ENCODE measurements at regions of chr12 and their contacts with region 1.

Region 1: DNA sequence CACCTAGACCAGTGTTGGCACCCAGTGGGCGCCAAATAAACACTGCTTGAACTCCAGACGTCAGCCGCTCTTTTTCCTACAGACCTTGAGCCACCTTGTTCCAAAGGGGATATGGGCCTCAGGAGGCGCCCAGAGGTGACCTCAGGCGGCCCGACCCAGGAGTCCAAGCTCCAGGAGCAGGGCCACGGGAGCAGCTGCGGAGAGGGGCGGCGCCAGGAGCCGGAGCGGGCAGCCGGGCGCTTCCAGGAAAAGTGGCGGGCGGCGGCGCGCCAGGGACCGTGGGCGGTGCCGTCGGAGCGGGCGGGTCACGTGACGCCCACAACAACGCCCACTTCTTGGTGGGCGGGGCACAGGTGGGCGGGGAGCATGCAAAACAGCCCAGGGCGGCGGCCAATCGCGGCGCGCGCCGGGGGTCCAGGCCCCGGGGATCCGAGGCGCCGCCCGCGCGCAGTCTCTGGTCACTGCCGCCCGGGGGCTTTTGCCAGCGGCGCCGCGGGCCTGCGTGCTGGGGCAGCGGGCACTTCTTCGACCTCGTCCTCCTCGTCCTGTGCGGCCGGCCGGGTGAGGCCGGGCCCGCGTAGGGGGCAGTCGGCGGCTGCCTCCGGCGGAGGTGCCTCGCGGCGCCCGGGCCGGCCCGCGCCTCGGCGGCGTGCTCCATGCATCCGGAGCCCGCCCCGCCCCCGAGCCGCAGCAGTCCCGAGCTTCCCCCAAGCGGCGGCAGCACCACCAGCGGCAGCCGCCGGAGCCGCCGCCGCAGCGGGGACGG is at the start of gene ORAI1:
- DNase-seq: peak; percentile 97
- ATAC-seq: peak; percentile 80
- H3K4me3 Mint-ChIP-seq: peak within 1 kb of the TSS; percentile 88
- H3K27ac Mint-ChIP-seq: peak within 1 kb of the TSS; percentile 95
- H3K4me1 Mint-ChIP-seq: peaks cover 40% of the 10 kb centered on the region
- H3K27me3 Mint-ChIP-seq: no peaks in the 10 kb centered on the region
- total RNA-seq, gene ORAI1: 53.7 to 61.1 TPM

Region 2: DNA sequence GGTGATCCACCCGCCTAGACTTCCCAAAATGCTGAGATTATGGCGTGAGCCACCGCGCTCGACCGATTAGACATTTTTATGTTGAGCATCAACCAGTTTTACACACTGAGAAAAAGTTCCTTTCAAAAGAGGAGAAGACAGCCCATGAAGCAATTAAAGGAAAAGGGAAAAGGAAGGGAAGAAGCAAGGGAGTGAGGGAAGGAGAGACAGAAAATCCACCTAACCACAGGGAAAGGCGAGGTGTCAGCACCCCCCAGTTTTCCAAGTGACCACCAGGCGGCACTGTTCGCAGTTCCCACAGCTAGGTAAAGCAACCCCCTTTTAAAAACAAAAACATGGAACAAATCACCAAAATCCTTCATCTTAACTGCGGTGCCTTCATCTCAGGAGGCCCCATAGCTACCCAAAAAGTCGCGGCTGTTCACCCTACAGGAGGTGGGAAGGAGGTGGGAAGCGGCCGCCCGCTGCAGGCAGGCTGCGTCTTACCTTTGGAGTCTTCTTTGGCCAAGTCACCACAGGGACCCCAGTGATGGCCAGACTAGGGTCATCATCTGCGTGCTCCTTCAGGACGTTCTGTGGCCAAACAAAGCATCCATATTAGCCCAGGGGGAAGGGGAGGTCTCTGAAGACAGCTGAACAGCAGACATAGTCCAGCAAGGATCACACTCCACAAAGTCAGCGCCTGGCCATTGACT is 132.0 kb before region 1 on chr12:
- CTCF ChIA-PET with region 1: interaction called, 28 read pairs
- DNase-seq: peak; percentile 68
- ATAC-seq: peak; percentile 51
- H3K4me3 Mint-ChIP-seq: no peak overlapping the region
- H3K27ac Mint-ChIP-seq: no peak overlapping the region
- H3K4me1 Mint-ChIP-seq: peaks cover 32% of the 10 kb centered on the region
- H3K27me3 Mint-ChIP-seq: no peaks in the 10 kb centered on the region

Region 3: DNA sequence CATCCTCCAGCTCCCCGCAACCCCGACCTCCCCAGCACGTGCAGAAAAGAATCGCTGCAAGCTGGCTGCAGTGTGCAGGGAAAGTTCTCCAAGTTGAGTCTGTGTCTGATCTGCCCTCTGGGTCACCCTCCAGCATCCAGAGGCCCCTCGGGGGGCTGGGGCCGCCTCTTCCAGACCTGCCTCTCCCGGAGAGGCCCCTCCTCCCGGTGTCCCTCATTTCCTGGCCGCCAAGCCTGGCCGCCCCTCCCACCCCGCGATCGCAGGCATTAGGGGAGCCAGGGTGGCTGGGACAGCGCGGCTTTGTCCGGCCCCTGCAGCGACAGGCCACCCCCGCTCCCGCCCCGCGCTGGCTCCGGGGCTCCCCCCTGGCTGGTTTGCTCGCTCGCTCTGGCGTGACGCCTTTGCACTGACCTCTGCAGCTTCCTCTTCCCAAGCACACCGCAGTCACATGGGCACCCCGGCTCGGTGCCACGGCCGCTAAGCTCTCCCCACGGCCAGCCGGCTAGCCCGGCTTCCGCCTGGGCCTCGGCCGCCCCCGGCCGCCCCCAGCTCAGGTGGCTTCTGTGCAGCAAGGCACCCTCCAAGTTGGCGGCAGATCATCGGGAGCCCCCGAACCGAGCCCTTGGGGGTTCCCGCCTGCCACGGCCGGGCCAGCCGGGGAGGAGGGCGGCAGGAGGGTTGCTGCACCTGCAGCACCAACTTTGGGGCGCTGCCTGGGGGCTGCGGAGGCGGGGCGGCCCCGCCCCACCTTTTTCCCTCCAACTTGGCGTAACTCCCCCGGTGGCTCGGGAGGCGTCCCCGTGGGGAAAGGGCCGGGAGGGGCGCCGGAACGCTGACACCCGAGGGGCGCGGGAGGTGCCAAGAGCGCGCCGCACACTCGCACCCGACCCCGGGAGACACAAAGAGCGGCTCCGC is 89.1 kb before region 1 on chr12:
- CTCF ChIA-PET with region 1: interaction called, 16 read pairs
- DNase-seq: peak; percentile 79
- ATAC-seq: peak; percentile 65
- H3K4me3 Mint-ChIP-seq: peak overlapping the region; percentile 71
- H3K27ac Mint-ChIP-seq: peak overlapping the region; percentile 67
- H3K4me1 Mint-ChIP-seq: peaks cover 53% of the 10 kb centered on the region
- H3K27me3 Mint-ChIP-seq: no peaks in the 10 kb centered on the region

Region 4: DNA sequence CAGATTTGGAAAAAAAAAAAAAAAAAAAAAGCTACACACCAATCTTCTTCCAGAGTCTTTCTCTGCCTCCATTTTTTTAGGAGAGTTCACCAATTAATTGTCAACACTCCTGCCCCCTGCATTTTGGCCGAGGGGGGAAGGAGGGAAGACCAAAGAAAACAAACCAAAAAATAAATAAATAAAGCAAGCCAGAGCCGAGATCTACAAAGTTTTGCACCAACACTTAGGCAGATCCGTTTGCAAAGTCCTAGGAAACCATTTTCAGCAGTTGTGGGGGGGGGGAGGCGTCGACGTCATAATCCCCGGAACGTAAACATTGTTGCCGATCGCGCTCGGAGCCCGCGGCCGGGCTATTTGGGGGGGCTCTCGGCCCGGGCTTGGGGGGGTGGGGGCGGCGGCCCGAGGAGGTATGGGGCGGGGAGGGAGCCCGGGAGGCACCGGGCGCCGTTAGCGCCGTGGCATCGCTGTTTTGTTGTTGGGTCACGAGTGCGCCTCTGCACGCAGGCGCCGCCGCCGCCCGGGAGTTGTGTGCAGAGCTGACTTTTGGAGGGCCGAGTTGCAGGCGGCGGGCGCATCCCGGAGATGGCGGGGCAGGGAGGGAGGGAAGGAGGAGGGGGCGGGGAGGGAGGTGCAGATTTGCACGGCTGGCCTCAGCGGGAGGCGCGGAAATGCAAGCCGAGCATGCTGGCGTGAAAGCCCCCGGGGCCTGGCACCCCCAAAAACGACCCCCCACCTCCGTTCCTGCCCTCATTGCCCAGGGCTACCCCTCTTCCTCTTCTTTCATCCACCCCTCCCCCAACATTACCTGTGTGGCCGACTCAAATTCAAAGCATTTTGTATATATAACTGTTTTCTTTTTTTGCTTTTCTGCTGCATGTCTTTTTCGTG is 46.0 kb before region 1 on chr12:
- CTCF ChIA-PET with region 1: interaction called, 44 read pairs
- DNase-seq: peak; percentile 85
- ATAC-seq: peak; percentile 78
- H3K4me3 Mint-ChIP-seq: peak overlapping the region; percentile 85
- H3K27ac Mint-ChIP-seq: peak overlapping the region; percentile 96
- H3K4me1 Mint-ChIP-seq: peaks cover 26% of the 10 kb centered on the region
- H3K27me3 Mint-ChIP-seq: no peaks in the 10 kb centered on the region

Region 5: GRCh38 chr12:121657305-121658008 is 31.2 kb after region 1 on chr12:
- CTCF ChIA-PET with region 1: interaction called, 11 read pairs
- DNase-seq: peak; percentile 61
- ATAC-seq: no peak
- H3K4me3 Mint-ChIP-seq: no peak overlapping the region
- H3K27ac Mint-ChIP-seq: peak overlapping the region; percentile 69
- H3K4me1 Mint-ChIP-seq: peaks cover 64% of the 10 kb centered on the region
- H3K27me3 Mint-ChIP-seq: no peaks in the 10 kb centered on the region

Region 6: DNA sequence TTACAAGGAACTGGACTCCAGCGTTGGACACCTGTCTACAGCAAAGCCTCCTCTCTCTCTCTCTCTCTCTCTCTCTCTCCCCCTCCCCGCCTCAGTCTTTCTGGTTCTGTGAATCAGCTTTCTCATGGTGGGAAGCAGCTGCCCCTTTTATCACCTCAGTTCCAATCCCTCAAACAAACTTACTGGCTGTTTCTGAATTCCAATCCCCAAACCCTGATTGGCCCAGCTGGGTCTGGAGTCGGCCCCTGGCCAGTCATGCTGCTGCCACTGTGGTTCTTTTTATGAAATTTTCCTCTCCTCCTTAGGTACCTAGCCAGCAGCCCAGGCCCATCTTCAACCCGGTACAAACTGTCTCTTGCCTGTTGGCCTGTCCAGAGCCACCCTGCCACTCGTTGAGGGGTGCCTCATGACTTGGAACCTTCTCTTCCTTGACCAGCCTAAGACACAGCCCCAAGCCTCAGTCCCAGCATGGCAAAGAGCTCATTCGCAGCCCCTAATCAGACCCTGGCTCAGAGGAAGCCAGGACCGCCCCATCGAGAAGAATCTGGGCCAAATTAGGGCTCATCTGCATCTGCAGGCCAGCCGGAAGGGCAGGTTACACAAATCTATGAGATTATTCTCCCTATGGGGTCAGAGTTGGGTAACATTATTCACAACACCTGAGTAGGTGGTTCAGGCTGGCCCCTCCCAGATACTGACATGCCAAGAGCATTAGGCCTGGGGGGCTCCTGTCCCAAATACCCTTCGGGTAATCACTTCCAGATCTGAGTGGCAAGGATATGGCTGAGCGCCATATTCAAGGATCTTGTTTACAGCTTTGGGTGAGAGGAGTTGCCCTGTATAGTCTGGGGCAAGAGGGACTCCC is 52.7 kb after region 1 on chr12:
- CTCF ChIA-PET with region 1: interaction called, 20 read pairs
- DNase-seq: no peak
- ATAC-seq: no peak
- H3K4me3 Mint-ChIP-seq: no peak overlapping the region
- H3K27ac Mint-ChIP-seq: peak overlapping the region; percentile 18
- H3K4me1 Mint-ChIP-seq: peaks cover 5% of the 10 kb centered on the region
- H3K27me3 Mint-ChIP-seq: no peaks in the 10 kb centered on the region